Heart right ventricle (tissue), 16 donors: ENCODE measurements at regions of chr5 and their contacts with region 1.

Region 1: GRCh38 chr5:114544561-114544960 is 182.7 kb downstream of the KCNN2 start:
- DNase-seq: no peak
- ATAC-seq: no peak
- H3K4me3 ChIP-seq: no peak overlapping the region
- H3K27ac ChIP-seq: no peak overlapping the region
- H3K4me1 ChIP-seq: no peaks in the 10 kb centered on the region
- H3K27me3 ChIP-seq: no peaks in the 10 kb centered on the region
- CTCF ChIP-seq: no peak

Region 2: GRCh38 chr5:114524221-114524620 is 20.3 kb before region 1 on chr5:
- intact Hi-C with region 1: loop called in 1 of 10 experiments (anchors 1 kb)
- DNase-seq: no peak
- ATAC-seq: no peak
- H3K4me3 ChIP-seq: no peak overlapping the region
- H3K27ac ChIP-seq: no peak overlapping the region
- H3K4me1 ChIP-seq: no peaks in the 10 kb centered on the region
- H3K27me3 ChIP-seq: no peaks in the 10 kb centered on the region
- CTCF ChIP-seq: no peak